Gastrocnemius medialis (tissue), 4 donors: ENCODE measurements at regions of chr2 and their contacts with region 1.

Region 1: GRCh38 chr2:121665504-121665903 is 16.2 kb upstream of the CLASP1 start:
- DNase-seq: no peak
- ATAC-seq: peak; percentile 90 to 95
- H3K4me3 ChIP-seq: no peak overlapping the region
- H3K27ac ChIP-seq: peak overlapping the region; percentile 59 to 76 (median 68)
- H3K4me1 ChIP-seq: peaks cover 4 to 30% of the 10 kb centered on the region in 2 donors
- H3K27me3 ChIP-seq: no peaks in the 10 kb centered on the region
- CTCF ChIP-seq: no peak
- POLR2A ChIP-seq: no peak

Region 2: GRCh38 chr2:121710470-121711170 is 45.1 kb after region 1 on chr2:
- in situ Hi-C with region 1: loop called in 1 of 4 experiments (anchors 10 kb)
- intact Hi-C with region 1: no loop called
- DNase-seq: no peak
- ATAC-seq: no peak
- H3K4me3 ChIP-seq: no peak overlapping the region
- H3K27ac ChIP-seq: no peak overlapping the region
- H3K4me1 ChIP-seq: no peaks in the 10 kb centered on the region
- H3K27me3 ChIP-seq: no peaks in the 10 kb centered on the region
- CTCF ChIP-seq: no peak
- POLR2A ChIP-seq: no peak